Activated T-helper 2 cell treated with anti-CD3 and anti-CD28 coated beads, Interferon-gamma antibody, Interleukin-2, Interleukin-4, amounts not matched to agents 10 μg/mL and 5 μg/mL and 100 μg/mL, durations not matched to agents 14 hours and 24 hours and 36 hours (primary cell): ENCODE measurements at regions of chr2 and their contacts with region 1.

Region 1: DNA sequence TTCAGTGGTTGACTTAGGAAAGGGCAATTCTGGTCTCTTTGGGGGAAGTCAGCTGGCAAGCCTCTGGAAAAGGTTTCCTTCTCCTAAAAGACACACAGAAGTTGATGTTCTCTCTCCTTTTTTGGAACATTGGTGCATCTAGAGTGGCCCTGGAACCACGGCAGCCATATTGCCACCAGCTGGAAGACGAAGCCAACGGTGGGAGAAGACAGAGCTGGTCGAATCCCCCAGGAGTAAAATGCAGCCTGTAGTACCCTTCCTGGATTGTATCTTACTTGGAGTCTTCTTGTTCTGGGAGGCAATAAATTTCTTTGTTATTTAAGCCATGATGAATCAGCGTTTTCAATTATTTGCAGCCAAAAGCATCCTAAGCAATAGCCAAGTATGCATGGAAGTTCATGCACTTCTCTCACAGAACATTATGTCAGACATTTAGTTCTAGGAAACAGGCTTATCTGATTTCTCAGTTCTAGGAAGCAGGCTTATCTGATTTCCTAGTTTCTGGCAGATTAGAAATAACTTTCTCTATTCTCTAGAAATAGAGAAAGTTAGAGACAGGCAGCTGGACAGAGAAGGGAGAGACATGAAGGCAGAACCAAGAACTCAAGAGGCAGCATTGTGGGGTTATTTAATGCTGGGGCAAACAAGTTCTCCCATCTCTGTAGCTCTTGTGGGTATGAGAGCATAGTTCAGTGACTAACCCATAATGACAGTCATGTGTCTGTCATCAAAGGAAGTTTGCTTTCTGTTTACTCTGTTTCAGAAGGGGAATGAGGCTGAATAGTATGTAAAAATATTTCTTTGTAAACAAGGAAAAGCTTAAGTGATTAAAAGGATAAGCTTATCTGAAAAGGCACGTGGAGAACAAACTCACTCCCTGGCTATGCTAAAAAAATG is 40.5 kb upstream of the NABP1 start:
- DNase-seq: peak; percentile 19
- H3K4me3 Mint-ChIP-seq: peak overlapping the region; percentile 66
- H3K27ac Mint-ChIP-seq: peak overlapping the region; percentile 81
- H3K4me1 Mint-ChIP-seq: peaks cover 54% of the 10 kb centered on the region
- H3K27me3 Mint-ChIP-seq: peaks cover 8% of the 10 kb centered on the region

Region 2: GRCh38 chr2:191020221-191020741 is 617.1 kb before region 1 on chr2:
- intact Hi-C with region 1: loop called (anchors 5 kb)
- DNase-seq: peak; percentile 96
- H3K4me3 Mint-ChIP-seq: no peak overlapping the region
- H3K27ac Mint-ChIP-seq: no peak overlapping the region
- H3K4me1 Mint-ChIP-seq: peaks cover 35% of the 10 kb centered on the region
- H3K27me3 Mint-ChIP-seq: no peaks in the 10 kb centered on the region

Region 3: GRCh38 chr2:191573216-191573615 is 64.2 kb before region 1 on chr2:
- intact Hi-C with region 1: loop called (anchors 1 kb)
- DNase-seq: no peak
- H3K4me3 Mint-ChIP-seq: no peak overlapping the region
- H3K27ac Mint-ChIP-seq: no peak overlapping the region
- H3K4me1 Mint-ChIP-seq: peaks cover 36% of the 10 kb centered on the region
- H3K27me3 Mint-ChIP-seq: peaks cover 32% of the 10 kb centered on the region

Region 4: GRCh38 chr2:191617575-191617974 is 19.9 kb before region 1 on chr2:
- intact Hi-C with region 1: loop called (anchors 1 kb)
- DNase-seq: peak; percentile 55
- H3K4me3 Mint-ChIP-seq: no peak overlapping the region
- H3K27ac Mint-ChIP-seq: peak overlapping the region; percentile 79
- H3K4me1 Mint-ChIP-seq: peaks cover 46% of the 10 kb centered on the region
- H3K27me3 Mint-ChIP-seq: no peaks in the 10 kb centered on the region

Region 5: GRCh38 chr2:191625016-191625415 is 12.4 kb before region 1 on chr2:
- intact Hi-C with region 1: loop called (anchors 1 kb)
- DNase-seq: peak; percentile 41
- H3K4me3 Mint-ChIP-seq: no peak overlapping the region
- H3K27ac Mint-ChIP-seq: peak overlapping the region; percentile 61
- H3K4me1 Mint-ChIP-seq: peaks cover 65% of the 10 kb centered on the region
- H3K27me3 Mint-ChIP-seq: peaks cover 4% of the 10 kb centered on the region

Region 6: GRCh38 chr2:191650896-191651773 is 13.7 kb after region 1 on chr2:
- intact Hi-C with region 1: loop called (anchors 1 kb)
- DNase-seq: no peak
- H3K4me3 Mint-ChIP-seq: no peak overlapping the region
- H3K27ac Mint-ChIP-seq: peak overlapping the region; percentile 26
- H3K4me1 Mint-ChIP-seq: peaks cover 14% of the 10 kb centered on the region
- H3K27me3 Mint-ChIP-seq: no peaks in the 10 kb centered on the region

Region 7: DNA sequence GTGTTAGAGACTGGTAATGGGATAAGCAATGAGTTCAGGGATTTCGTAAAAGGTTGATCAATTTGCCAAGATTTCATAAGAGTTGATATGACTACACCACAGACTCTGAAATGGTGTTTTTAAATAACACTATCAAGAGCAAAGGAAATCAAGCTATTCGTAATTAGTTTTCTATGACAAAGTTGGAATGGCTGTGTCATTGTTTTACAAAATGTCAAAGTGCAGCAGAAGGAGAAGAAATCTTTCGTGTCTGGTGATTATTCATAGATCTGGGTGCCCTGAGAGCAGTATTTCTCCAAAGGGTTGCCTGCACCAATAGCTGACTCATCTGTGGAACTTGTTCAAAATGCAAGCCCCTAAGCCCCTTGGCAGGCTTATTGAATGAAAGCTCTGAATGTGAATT is 110.6 kb after region 1 on chr2:
- intact Hi-C with region 1: loop called (anchors 5 kb)
- DNase-seq: no peak
- H3K4me3 Mint-ChIP-seq: no peak overlapping the region
- H3K27ac Mint-ChIP-seq: no peak overlapping the region
- H3K4me1 Mint-ChIP-seq: peaks cover 12% of the 10 kb centered on the region
- H3K27me3 Mint-ChIP-seq: peaks cover 19% of the 10 kb centered on the region

Region 8: GRCh38 chr2:192016265-192016664 is 378.8 kb after region 1 on chr2:
- intact Hi-C with region 1: no loop called
- DNase-seq: no peak
- H3K4me3 Mint-ChIP-seq: no peak overlapping the region
- H3K27ac Mint-ChIP-seq: no peak overlapping the region
- H3K4me1 Mint-ChIP-seq: no peaks in the 10 kb centered on the region
- H3K27me3 Mint-ChIP-seq: peaks cover 8% of the 10 kb centered on the region